Right cardiac atrium (tissue), 5 donors: ENCODE measurements at regions of chr1 and their contacts with region 1.

Region 1: GRCh38 chr1:233172227-233172626 is 123.3 kb downstream of the PCNX2 start:
- DNase-seq: no peak
- ATAC-seq: peak in 1 of 2 donors; percentile 31
- H3K4me3 ChIP-seq: no peak overlapping the region
- H3K27ac ChIP-seq: no peak overlapping the region
- H3K4me1 ChIP-seq: no peaks in the 10 kb centered on the region
- H3K27me3 ChIP-seq: no peaks in the 10 kb centered on the region

Region 2: GRCh38 chr1:232635778-232636356 is 536.4 kb before region 1 on chr1:
- intact Hi-C with region 1: loop called in 3 of 4 experiments (anchors 5 to 10 kb)
- DNase-seq: no peak
- ATAC-seq: peak; percentile 64 to 69
- H3K4me3 ChIP-seq: no peak overlapping the region
- H3K27ac ChIP-seq: no peak overlapping the region
- H3K4me1 ChIP-seq: no peaks in the 10 kb centered on the region
- H3K27me3 ChIP-seq: no peaks in the 10 kb centered on the region

Region 3: DNA sequence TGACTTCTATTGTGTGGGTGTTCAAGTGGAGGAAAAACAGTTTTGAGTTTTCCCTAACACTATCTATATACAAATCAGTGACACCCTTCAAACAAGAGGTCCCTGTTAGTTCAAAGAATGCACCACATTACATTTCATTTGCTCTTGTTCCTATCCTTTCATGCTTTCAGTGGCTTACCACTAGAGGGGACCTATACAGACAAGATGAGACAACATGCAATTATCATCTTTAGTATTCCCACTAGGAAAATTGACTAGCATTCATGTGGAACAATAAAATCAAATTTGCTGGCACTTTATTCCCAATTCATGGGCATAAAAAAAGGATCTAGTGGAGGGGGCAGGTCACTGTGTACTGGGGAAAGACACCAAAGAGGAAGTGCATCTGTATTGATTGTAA is 529.0 kb before region 1 on chr1:
- intact Hi-C with region 1: loop called in 3 of 4 experiments (anchors 5 to 10 kb)
- DNase-seq: no peak
- ATAC-seq: no peak
- H3K4me3 ChIP-seq: no peak overlapping the region
- H3K27ac ChIP-seq: no peak overlapping the region
- H3K4me1 ChIP-seq: no peaks in the 10 kb centered on the region
- H3K27me3 ChIP-seq: no peaks in the 10 kb centered on the region

Region 4: DNA sequence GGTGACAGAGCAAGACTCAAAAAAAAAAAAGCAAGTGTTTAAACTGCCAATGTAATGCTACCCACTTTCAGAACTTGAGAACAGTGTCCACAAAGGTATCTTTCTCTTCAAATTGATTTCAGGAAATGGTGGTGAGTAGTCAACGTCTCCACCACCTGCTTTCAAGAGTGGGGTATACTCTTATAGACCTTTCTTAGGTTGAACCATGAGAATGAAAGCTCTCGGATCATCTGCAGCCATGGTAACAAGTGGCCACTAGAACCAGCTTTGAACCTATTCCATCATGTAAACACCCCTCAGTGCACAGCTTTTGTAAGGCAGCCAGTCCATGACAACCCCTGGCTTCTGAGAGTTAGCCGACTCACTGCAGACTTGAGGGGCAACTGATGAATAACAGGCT is 114.4 kb before region 1 on chr1:
- intact Hi-C with region 1: loop called in 1 of 4 experiments (anchors 10 kb)
- DNase-seq: no peak
- ATAC-seq: no peak
- H3K4me3 ChIP-seq: no peak overlapping the region
- H3K27ac ChIP-seq: no peak overlapping the region
- H3K4me1 ChIP-seq: peaks cover 2% of the 10 kb centered on the region
- H3K27me3 ChIP-seq: no peaks in the 10 kb centered on the region

Region 5: DNA sequence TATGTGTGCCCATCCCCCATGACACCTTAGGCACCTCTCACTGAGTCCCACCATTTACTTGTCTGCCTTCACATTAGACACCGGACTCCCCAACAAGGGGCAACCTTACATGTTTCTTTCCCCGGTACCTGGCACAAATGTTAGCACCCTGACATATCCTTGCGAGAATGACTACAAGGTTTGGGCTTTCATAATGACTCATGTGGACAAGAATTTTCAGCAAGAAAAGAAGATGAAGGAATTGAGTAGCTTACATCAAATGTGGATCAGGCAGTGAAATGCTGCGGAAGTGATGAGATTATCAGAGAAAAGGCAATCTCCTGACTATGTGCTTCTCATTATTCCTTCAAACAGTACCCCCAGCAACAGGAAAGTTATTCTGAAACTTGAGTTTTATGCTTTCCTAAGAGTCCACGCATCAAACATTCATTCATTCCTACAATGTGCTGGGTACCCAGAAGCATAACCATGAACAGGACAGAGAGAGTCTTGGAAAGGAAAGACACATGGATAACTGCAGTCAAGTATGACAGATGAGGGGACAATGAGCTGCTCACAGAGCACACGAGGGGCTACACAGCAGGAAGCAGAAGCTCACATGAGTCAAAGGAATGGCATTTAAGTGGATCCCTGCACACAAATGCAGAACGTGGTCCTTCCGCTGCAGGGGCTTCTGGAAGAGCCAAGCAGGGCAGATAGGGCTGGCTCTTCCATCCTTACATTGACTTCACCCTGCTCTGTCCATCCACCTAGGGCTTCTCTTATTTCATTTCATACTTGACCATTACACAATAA is 11.2 kb after region 1 on chr1:
- intact Hi-C with region 1: no loop called
- DNase-seq: no peak
- ATAC-seq: no peak
- H3K4me3 ChIP-seq: no peak overlapping the region
- H3K27ac ChIP-seq: no peak overlapping the region
- H3K4me1 ChIP-seq: no peaks in the 10 kb centered on the region
- H3K27me3 ChIP-seq: no peaks in the 10 kb centered on the region

Region 6: GRCh38 chr1:233707153-233707879 is 535.1 kb after region 1 on chr1:
- intact Hi-C with region 1: no loop called
- DNase-seq: no peak
- ATAC-seq: peak; percentile 36 to 39
- H3K4me3 ChIP-seq: no peak overlapping the region
- H3K27ac ChIP-seq: no peak overlapping the region
- H3K4me1 ChIP-seq: peaks cover 3% of the 10 kb centered on the region
- H3K27me3 ChIP-seq: no peaks in the 10 kb centered on the region